Heart left ventricle (tissue), 16 donors: ENCODE measurements at regions of chr11 and their contacts with region 1.

Region 1: DNA sequence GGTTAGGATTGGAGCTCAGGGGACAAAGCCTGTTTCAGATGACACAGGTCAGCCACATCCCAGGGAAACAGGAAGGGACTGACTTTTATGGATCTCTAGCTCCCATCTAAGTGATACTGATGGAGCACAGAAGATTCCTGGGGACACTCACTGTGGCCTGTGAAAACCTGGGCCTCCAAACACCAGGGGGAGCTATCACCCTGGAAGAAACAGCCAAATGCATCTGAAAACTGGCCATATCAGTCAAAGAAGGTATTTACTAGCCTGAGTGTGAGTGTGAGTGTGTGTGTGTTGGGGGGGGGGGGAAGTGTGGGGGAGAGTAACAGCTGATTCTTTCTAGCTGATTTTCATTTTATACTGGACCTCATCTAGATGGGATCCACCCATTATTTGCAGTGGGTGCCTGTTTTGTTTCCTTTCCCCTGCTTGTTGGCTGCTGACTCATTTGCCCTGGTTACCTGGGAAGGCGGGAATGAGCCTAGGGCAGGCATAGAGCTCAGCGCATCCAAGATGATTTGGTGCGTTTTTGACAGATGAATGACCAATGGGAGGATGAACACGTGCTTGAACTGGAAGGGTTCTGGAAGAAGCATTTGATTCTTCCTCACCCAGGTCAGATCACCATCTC is 284.0 kb downstream of the KIRREL3 start:
- DNase-seq: no peak
- ATAC-seq: no peak
- H3K4me3 ChIP-seq: no peak overlapping the region
- H3K27ac ChIP-seq: no peak overlapping the region
- H3K4me1 ChIP-seq: peaks cover 0 to 6% (median 0%) of the 10 kb centered on the region in 12 donors
- H3K27me3 ChIP-seq: peaks cover 0 to 22% (median 4%) of the 10 kb centered on the region in 9 donors
- CTCF ChIP-seq: peak; percentile 10 to 53 (median 36)
- POLR2A ChIP-seq: no peak

Region 2: GRCh38 chr11:126660761-126661425 is 55.7 kb before region 1 on chr11:
- intact Hi-C with region 1: no loop called
- DNase-seq: no peak
- ATAC-seq: no peak
- H3K4me3 ChIP-seq: no peak overlapping the region
- H3K27ac ChIP-seq: no peak overlapping the region
- H3K4me1 ChIP-seq: no peaks in the 10 kb centered on the region
- H3K27me3 ChIP-seq: peaks cover 0 to 12% (median 0%) of the 10 kb centered on the region in 9 donors
- CTCF ChIP-seq: no peak
- POLR2A ChIP-seq: no peak

Region 3: DNA sequence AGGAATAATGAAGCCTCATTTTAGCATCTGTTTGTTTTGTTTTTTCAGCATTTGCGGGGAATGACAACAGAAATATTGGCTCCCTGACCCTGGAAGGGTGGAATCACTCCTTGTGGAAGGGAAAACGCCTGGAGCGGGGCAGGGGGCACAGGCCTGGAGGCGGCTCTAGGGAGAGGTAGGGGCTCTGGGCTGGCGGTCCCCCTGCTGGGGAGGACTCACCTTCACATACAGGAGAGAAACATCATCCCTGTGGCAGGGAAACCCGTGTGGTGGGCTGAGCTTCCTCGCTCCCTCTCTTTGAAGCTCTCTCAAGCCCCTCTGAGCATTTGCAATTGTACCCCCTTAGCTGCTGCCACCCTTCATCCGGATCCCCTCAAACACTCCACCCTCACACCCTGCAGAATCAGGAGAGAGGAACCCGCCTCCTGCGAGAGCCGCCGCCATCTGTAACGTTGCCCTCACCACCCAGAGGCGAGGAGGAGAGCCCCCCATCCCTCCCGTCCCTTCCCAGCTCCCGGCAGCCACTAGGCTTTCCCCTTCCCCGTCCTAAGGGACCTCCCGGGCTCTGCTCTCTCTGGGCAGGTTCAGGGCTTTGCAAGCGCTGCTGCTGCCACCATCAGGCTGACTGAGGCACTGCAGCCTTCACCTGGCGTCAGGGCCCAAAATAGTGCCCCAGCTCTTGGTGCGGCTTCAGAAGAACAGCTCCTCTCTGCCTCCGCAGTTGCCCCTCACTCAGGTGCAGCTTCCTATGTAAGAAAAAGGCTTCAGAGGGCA is 273.6 kb after region 1 on chr11:
- intact Hi-C with region 1: loop called in 8 of 10 experiments (anchors 1 to 10 kb)
- DNase-seq: peak; percentile 41 to 76 (median 70)
- ATAC-seq: peak; percentile 78 to 85 (median 84)
- H3K4me3 ChIP-seq: no peak overlapping the region
- H3K27ac ChIP-seq: no peak overlapping the region
- H3K4me1 ChIP-seq: peaks cover 0 to 4% (median 0%) of the 10 kb centered on the region in 12 donors
- H3K27me3 ChIP-seq: peaks cover 0 to 31% (median 7%) of the 10 kb centered on the region in 9 donors
- CTCF ChIP-seq: peak; percentile 79 to 93 (median 86)
- POLR2A ChIP-seq: no peak

Region 4: GRCh38 chr11:127340438-127340837 is 623.9 kb after region 1 on chr11:
- intact Hi-C with region 1: loop called in 1 of 10 experiments (anchors 5 kb)
- DNase-seq: no peak
- ATAC-seq: no peak
- H3K4me3 ChIP-seq: no peak overlapping the region
- H3K27ac ChIP-seq: no peak overlapping the region
- H3K4me1 ChIP-seq: no peaks in the 10 kb centered on the region
- H3K27me3 ChIP-seq: peaks cover 0 to 4% (median 0%) of the 10 kb centered on the region in 9 donors
- CTCF ChIP-seq: no peak
- POLR2A ChIP-seq: no peak